ENCODE measurements at regions of chr1 and their contacts with region 1.

Region 1: DNA sequence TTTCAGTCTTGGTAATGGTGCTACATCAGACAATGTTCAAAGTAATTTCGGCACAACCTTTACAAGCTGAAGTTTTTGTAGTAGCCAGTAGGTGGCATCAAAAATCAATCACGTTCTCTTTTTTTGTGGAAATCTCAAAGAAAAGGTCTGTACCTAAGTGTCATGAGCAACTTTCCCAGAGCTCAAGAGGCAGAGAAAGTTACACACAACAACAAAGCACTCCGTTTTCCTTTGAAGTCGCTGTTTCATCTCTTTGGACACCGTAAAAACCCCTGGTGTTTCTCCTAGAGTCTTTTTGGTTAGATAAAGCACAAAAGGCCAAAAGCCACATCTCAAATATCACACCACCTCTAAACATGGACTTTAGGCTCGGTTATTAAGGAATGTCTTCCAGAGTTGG is 131.6 kb downstream of the LHX8 start:
- DNase-seq: peak; percentile 37
- H3K4me3 ChIP-seq: no peak overlapping the region
- H3K27ac ChIP-seq: no peak overlapping the region
- H3K4me1 ChIP-seq: no peaks in the 10 kb centered on the region
- CTCF ChIP-seq: peak; percentile 78

Region 2: DNA sequence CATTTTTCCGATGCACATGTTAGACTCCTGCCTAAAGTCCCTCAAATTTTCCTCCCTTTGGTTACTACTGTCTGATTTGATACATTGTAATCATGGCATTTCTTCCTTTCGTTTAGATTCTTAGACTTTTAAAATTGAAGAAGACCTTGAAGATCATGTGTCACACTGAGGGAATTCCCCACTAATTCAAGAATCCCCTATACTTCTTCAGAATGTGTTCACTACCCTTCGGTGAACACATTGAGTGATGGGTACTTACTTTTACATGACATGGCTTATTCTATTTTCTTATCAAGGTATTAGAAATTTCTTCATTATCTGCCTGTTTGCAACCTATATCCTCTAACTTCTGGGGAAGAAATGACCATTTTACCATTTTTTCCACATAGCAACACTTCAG is 45.7 kb before region 1 on chr1:
- CTCF ChIA-PET with region 1: no interaction called
- POLR2A ChIA-PET with region 1: no interaction called
- intact Hi-C with region 1: loop called (anchors 1 kb)
- DNase-seq: no peak
- H3K4me3 ChIP-seq: no peak overlapping the region
- H3K27ac ChIP-seq: no peak overlapping the region
- H3K4me1 ChIP-seq: no peaks in the 10 kb centered on the region
- CTCF ChIP-seq: no peak

Region 3: GRCh38 chr1:75310067-75310466 is 44.3 kb after region 1 on chr1:
- CTCF ChIA-PET with region 1: no interaction called
- POLR2A ChIA-PET with region 1: no interaction called
- intact Hi-C with region 1: no loop called
- DNase-seq: no peak
- H3K4me3 ChIP-seq: no peak overlapping the region
- H3K27ac ChIP-seq: no peak overlapping the region
- H3K4me1 ChIP-seq: no peaks in the 10 kb centered on the region
- CTCF ChIP-seq: no peak

Region 4: DNA sequence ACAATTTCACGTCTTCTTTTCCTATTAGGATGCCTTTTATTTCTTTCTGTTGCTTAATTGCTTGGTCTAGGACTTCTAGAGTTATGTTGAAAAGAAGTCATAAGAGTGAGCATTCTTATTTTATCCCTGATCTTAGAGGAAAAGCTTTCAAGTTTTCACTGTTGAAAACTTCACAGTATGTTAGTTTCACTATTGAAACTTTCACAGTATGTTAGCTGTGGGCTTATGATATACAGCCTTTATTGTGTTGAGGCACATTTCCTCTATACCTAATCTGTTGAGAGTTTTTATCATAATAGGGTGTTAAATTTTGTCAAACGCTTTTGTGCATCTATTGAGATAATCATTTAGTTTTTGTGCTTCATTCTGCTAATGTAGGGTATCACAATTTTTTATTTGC is 95.5 kb after region 1 on chr1:
- CTCF ChIA-PET with region 1: no interaction called
- POLR2A ChIA-PET with region 1: no interaction called
- intact Hi-C with region 1: no loop called
- DNase-seq: no peak
- H3K4me3 ChIP-seq: no peak overlapping the region
- H3K27ac ChIP-seq: no peak overlapping the region
- H3K4me1 ChIP-seq: no peaks in the 10 kb centered on the region
- CTCF ChIP-seq: no peak

Region 5: GRCh38 chr1:75632350-75632949 is 366.7 kb after region 1 on chr1:
- CTCF ChIA-PET with region 1: no interaction called
- POLR2A ChIA-PET with region 1: no interaction called
- intact Hi-C with region 1: loop called (anchors 10 kb)
- DNase-seq: peak; percentile 14
- H3K4me3 ChIP-seq: no peak overlapping the region
- H3K27ac ChIP-seq: no peak overlapping the region
- H3K4me1 ChIP-seq: no peaks in the 10 kb centered on the region
- CTCF ChIP-seq: peak; percentile 86

Region 6: DNA sequence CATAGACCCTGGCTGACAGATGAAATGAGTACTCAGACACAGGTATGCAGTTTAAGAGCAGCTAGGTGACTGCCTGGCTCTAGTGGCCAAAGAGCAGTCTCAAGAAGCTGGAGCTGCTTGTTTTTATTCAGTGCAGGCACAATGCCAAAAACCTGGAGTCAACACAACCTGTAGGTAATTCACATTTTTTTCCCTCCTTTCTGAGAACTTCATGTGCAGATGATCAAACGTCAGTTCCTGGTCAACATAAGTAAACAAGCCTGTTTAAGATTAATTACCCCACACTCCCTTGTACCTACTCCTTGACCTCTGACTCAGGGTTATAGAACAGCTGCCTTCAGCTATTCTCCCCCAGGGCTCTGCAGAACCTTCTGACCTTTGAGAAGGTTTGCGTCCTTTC is 441.4 kb after region 1 on chr1:
- CTCF ChIA-PET with region 1: no interaction called
- POLR2A ChIA-PET with region 1: no interaction called
- intact Hi-C with region 1: no loop called
- DNase-seq: no peak
- H3K4me3 ChIP-seq: no peak overlapping the region
- H3K27ac ChIP-seq: no peak overlapping the region
- H3K4me1 ChIP-seq: no peaks in the 10 kb centered on the region
- CTCF ChIP-seq: no peak

Measured in OCI-LY7 (cell line).